Naive thymus-derived CD4-positive, alpha-beta T cell (primary cell): ENCODE measurements at regions of chr19 and their contacts with region 1.

Region 1: DNA sequence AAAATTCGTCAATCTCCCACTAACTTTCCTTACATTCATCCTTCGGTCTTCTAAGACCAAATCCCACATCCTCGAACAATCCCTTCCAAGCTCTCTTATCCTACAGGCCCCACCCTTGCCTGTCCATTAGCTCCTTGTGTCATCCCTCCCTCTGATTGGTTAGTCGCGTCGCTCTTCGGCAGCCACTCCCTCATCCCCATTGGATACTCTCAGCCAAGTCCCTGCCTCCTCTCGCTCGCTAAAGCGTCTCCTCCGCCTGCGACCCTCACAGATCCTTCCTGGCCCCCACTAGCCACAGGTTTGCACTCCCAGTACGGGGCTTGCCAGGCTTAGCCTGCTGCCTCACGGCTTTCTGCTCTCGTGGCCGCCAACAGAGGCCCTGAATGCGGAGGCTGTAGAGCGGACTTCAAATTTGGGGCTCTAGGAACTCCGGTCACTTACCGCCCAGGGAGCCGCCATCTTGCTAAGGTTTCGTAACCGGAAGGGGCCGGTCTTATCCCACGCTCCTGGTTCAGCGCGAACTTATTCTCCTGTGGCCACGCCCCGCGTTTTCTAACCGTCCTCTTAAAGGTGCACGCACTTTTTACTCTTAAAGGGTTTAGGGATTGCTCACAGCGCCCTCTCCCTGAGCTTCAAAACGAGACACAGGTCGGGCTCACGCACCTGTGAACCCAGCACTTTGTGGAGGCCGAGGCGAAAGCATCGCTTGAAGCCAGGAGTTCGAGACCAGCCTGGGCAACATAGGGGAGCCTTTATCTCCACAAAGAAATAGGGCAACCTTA is at the start of gene DMAC2:
- DNase-seq: peak; percentile 65 to 94 (median 88)
- ATAC-seq: peak; percentile 100
- H3K4me3 ChIP-seq: peak within 1 kb of the TSS; percentile 96
- H3K4me3 Mint-ChIP-seq: peak within 1 kb of the TSS in 2 of 10 donors; percentile 49 to 54
- H3K27ac ChIP-seq: peak within 1 kb of the TSS; percentile 85
- H3K27ac Mint-ChIP-seq: peak within 1 kb of the TSS in 5 of 9 donors; percentile 3 to 89 (median 56)
- H3K4me1 ChIP-seq: peaks cover 7 to 12% of the 10 kb centered on the region in 2 donors
- H3K4me1 Mint-ChIP-seq: peaks cover 4 to 25% (median 6%) of the 10 kb centered on the region in 7 donors
- H3K27me3 ChIP-seq: no peaks in the 10 kb centered on the region
- H3K27me3 Mint-ChIP-seq: peaks cover 0 to 2% (median 0%) of the 10 kb centered on the region in 5 donors
- total RNA-seq, gene DMAC2: 22.2 to 44.4 (median 26.2) TPM

Region 2: DNA sequence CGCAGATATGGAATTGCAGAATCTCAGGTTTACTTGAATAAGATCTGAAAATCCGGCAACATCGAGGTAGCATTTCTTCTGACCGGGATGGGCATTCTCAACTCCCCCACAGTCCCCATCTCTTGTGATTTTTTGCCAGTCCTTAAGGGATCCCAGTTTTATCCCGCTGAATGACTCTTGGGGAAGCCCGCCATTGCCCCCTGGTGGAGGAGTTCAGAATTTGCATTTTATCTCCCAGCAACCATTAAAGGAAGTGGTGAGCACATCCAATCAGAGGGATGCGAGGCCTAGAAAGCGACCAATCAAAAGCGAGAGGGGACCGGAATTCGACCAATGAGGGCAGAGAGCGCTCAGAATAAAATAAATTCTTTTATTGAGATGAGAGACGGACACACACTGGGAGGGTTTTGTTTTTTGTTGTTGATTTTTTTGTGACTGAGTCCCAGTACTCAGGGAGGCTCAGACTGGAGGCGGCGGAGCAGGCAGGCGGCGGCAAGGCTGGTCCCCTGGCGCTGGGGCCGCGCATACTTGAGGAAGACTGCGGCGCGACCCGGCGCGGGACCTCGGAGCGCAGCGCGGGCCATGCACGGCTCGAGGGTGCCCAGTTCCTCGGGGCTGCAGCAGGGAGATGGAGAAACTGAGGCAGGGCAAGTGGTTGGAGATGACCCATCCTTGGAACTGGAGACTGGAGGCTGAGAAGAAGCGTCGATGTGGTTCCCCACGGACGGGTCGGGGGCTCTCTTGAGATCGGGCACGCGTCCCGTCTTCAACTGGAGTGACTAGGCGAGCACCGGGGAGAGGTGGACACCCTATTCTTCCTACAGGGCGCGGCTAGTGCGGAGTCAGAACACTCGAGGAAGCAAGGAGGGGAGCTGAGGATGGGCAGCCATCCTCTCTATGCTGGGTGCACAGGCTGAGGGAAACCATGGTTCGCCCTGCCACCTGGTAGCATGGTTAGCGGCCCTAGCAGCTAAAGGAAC is 1217.5 kb before region 1 on chr19:
- CTCF ChIA-PET with region 1: no interaction called
- POLR2A ChIA-PET with region 1: no interaction called
- intact Hi-C with region 1: no loop called
- DNase-seq: peak; percentile 54 to 86 (median 82)
- ATAC-seq: peak; percentile 92
- H3K4me3 ChIP-seq: no peak overlapping the region
- H3K4me3 Mint-ChIP-seq: peak overlapping the region; percentile 16 to 85 (median 68)
- H3K27ac ChIP-seq: no peak overlapping the region
- H3K27ac Mint-ChIP-seq: peak overlapping the region; percentile 5 to 85 (median 58)
- H3K4me1 ChIP-seq: peaks cover 4 to 20% of the 10 kb centered on the region in 2 donors
- H3K4me1 Mint-ChIP-seq: peaks cover 12 to 30% (median 24%) of the 10 kb centered on the region in 7 donors
- H3K27me3 ChIP-seq: peaks cover 16 to 35% of the 10 kb centered on the region in 2 donors
- H3K27me3 Mint-ChIP-seq: peaks cover 49 to 70% (median 60%) of the 10 kb centered on the region in 5 donors

Region 3: GRCh38 chr19:41206926-41207750 is 232.5 kb before region 1 on chr19:
- CTCF ChIA-PET with region 1: no interaction called
- POLR2A ChIA-PET with region 1: no interaction called
- intact Hi-C with region 1: loop called (anchors 1 to 5 kb)
- DNase-seq: no peak
- ATAC-seq: no peak
- H3K4me3 ChIP-seq: no peak overlapping the region
- H3K4me3 Mint-ChIP-seq: no peak overlapping the region
- H3K27ac ChIP-seq: no peak overlapping the region
- H3K27ac Mint-ChIP-seq: peak overlapping the region in 6 of 9 donors; percentile 15 to 85 (median 54)
- H3K4me1 ChIP-seq: no peaks in the 10 kb centered on the region
- H3K4me1 Mint-ChIP-seq: peaks cover 3 to 12% (median 7%) of the 10 kb centered on the region in 7 donors
- H3K27me3 ChIP-seq: no peaks in the 10 kb centered on the region
- H3K27me3 Mint-ChIP-seq: no peaks in the 10 kb centered on the region

Region 4: DNA sequence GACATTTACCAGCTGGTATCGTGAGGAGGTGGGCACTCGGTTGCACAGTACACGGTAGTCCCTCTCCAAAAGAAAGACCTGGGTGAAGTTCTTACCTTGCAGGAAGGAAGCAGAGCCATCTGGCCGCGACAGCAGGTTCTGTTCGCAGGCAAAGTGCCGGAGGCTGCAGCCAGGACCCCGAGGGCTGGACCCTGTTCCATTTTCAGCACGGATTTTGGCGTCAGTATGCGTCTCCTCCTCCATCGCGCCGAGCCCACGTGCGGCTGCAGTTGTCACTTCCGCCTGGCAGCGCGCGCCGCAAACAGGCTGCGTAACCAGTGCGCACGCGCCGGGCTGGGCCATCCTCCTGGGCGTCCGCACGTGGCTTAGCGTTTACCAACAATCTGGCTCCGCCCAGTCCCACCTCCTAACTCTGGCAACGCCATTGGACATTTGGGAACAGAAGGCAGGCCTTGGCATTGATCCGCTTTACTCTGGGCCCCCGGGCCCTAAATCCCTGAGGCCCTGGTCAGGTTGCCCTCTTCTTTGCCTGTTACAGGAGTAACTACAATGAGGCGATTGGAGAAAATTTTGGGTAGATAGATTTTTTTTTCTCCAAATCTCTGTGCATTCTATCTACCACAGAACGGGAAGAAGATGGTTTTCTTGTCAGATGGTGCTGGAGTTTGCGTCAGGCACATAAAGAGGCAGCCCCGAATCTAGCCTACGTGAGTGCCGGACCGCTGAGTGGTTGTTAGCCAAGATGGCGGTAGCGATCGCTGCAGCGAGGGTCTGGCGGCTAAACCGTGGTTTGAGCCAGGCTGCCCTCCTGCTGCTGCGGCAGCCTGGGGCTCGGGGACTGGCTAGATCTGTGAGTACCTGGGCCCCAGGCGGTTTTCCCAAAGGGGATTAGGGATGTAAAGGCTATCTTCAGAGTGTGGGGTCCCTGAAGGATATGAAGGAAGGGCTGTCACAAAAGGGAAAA is 42.3 kb before region 1 on chr19 and contains the starts of genes BCKDHA and EXOSC5:
- CTCF ChIA-PET with region 1: no interaction called
- POLR2A ChIA-PET with region 1: interaction called, 3 read pairs
- intact Hi-C with region 1: loop called (anchors 1 kb)
- DNase-seq: peak; percentile 96 to 100 (median 99)
- ATAC-seq: peak; percentile 99
- H3K4me3 ChIP-seq: peak within 1 kb of the TSS; percentile 96
- H3K4me3 Mint-ChIP-seq: peak within 1 kb of the TSS; percentile 95 to 99 (median 98)
- H3K27ac ChIP-seq: peak within 1 kb of the TSS; percentile 89
- H3K27ac Mint-ChIP-seq: peak within 1 kb of the TSS; percentile 99 to 100 (median 100)
- H3K4me1 ChIP-seq: peaks cover 19 to 23% of the 10 kb centered on the region in 2 donors
- H3K4me1 Mint-ChIP-seq: peaks cover 33 to 61% (median 50%) of the 10 kb centered on the region in 7 donors
- H3K27me3 ChIP-seq: no peaks in the 10 kb centered on the region
- H3K27me3 Mint-ChIP-seq: no peaks in the 10 kb centered on the region
- total RNA-seq, gene BCKDHA: 19.4 to 25.0 (median 20.5) TPM
- total RNA-seq, gene EXOSC5: 15.0 to 37.5 (median 20.6) TPM

Region 5: DNA sequence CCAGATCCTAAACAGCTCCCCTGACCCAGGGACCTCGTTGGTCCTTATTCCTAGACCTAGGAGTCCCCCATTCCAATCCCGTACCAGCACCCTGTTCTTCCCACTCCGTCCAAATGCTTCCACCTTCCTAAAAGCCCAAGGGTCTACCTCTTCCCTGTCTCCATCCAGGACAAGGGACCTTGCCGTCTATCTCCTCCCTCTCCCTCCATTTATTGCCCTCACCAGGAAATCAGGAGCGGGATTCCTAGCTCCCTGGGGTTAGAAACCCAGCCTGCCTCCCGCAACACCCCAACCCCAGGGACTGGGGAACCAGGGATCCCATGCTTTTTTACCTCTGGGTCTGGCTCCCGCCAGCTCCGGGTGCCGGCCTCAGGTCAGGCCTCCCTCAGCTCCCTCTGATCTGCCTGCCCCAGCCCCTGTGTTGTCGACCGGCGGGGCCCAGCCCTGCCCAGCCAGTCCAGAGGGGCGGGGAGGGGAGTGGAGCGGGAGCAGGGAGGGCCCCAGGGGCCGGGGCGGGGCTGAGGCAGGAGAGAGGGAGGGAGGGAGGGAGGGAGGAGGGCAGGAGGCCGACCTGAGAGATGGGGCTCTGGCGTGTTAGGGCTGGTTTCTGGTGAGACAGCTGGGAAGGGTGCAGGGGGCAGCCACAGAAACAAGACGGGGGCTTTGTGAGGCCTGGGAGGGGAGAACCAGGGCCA is 12.5 kb before region 1 on chr19 and contains the start of gene B3GNT8:
- CTCF ChIA-PET with region 1: interaction called, 5 read pairs
- POLR2A ChIA-PET with region 1: interaction called, 14 read pairs
- intact Hi-C with region 1: loop called in 1 of 2 experiments (anchors 1 kb)
- DNase-seq: peak in 3 of 9 donors; percentile 15 to 48 (median 40)
- ATAC-seq: peak; percentile 55
- H3K4me3 ChIP-seq: peak within 1 kb of the TSS; percentile 26
- H3K4me3 Mint-ChIP-seq: peak within 1 kb of the TSS; percentile 80 to 98 (median 89)
- H3K27ac ChIP-seq: peak within 1 kb of the TSS; percentile 70
- H3K27ac Mint-ChIP-seq: peak within 1 kb of the TSS; percentile 86 to 96 (median 92)
- H3K4me1 ChIP-seq: peaks cover 6 to 9% of the 10 kb centered on the region in 2 donors
- H3K4me1 Mint-ChIP-seq: peaks cover 7 to 34% (median 28%) of the 10 kb centered on the region in 7 donors
- H3K27me3 ChIP-seq: no peaks in the 10 kb centered on the region
- H3K27me3 Mint-ChIP-seq: no peaks in the 10 kb centered on the region
- total RNA-seq, gene B3GNT8: 0.32 to 5.3 (median 1.1) TPM